ENCODE measurements at regions of chr11 and their contacts with region 1.

Region 1: GRCh38 chr11:94449437-94449836 is 44.2 kb downstream of the MRE11 start:
- DNase-seq: no peak
- ATAC-seq: no peak
- H3K4me3 ChIP-seq: no peak overlapping the region
- H3K27ac ChIP-seq: no peak overlapping the region
- H3K4me1 ChIP-seq: no peaks in the 10 kb centered on the region
- H3K27me3 ChIP-seq: no peaks in the 10 kb centered on the region
- CTCF ChIP-seq: no peak
- EP300 ChIP-seq: no peak
- POLR2A ChIP-seq: no peak
- RAD21 ChIP-seq: no peak

Region 2: GRCh38 chr11:94433049-94433448 is 16.4 kb before region 1 on chr11:
- CTCF ChIA-PET with region 1: no interaction called
- POLR2A ChIA-PET with region 1: interaction called, 11 read pairs
- in situ Hi-C with region 1: no loop called
- intact Hi-C with region 1: no loop called
- DNase-seq: no peak
- ATAC-seq: no peak
- H3K4me3 ChIP-seq: no peak overlapping the region
- H3K27ac ChIP-seq: no peak overlapping the region
- H3K4me1 ChIP-seq: no peaks in the 10 kb centered on the region
- H3K27me3 ChIP-seq: no peaks in the 10 kb centered on the region
- CTCF ChIP-seq: no peak
- EP300 ChIP-seq: no peak
- POLR2A ChIP-seq: no peak
- RAD21 ChIP-seq: no peak